OCI-LY7 (cell line): ENCODE measurements at regions of chr5 and their contacts with region 1.

Region 1: GRCh38 chr5:134209477-134210240 is 16.2 kb downstream of the PPP2CA start:
- DNase-seq: no peak
- H3K4me3 ChIP-seq: no peak overlapping the region
- H3K27ac ChIP-seq: no peak overlapping the region
- H3K4me1 ChIP-seq: no peaks in the 10 kb centered on the region
- CTCF ChIP-seq: no peak

Region 2: DNA sequence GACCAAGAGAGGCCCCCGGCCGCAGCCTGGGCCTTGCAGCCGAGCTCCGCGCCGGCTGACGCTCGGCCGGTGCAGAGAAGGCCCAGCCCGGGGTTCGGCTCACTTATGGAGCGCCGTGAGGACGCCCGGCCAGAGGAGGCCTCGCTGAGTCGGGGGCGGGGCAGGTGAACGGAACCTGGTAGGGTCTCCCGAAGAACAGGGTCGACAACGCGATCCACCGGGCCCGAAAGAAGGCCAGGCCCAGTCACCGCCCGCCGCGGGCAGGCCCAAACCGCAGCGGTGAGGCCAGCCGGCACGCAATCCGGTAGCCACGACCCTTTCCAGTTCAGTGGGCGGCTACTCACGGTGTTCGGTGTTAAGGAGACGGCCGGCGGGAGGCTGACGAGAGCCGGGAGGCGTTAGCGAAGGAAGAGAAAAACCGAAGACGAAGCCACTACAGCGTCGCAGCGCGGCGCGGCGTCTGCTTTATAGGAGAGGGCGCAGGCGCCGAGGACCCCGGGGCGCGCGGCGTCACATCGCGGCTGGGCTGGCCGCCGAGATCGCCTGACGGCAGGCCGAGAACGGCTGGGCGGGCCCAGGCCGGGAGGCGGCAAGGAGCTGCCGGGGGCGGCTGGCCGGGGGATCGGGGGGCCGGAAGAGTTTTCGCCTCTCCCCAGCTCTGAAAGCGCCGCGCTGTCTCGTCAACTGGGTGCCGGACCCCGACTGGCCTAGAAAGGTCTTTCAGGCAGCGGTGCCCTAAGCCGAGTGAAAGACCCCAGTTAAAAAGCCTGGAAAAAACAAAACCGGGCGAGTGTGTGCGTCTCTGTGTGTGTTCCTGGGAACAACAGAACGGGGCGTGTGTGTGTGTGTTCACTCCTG is 32.9 kb before region 1 on chr5 and contains the start of gene SKP1:
- CTCF ChIA-PET with region 1: no interaction called
- POLR2A ChIA-PET with region 1: interaction called, 10 read pairs
- intact Hi-C with region 1: no loop called
- DNase-seq: peak; percentile 89
- H3K4me3 ChIP-seq: peak within 1 kb of the TSS; percentile 89
- H3K27ac ChIP-seq: peak within 1 kb of the TSS; percentile 75
- H3K4me1 ChIP-seq: peaks cover 23% of the 10 kb centered on the region
- CTCF ChIP-seq: no peak
- total RNA-seq, gene SKP1: 129 and 142 TPM in 2 replicates

Region 3: DNA sequence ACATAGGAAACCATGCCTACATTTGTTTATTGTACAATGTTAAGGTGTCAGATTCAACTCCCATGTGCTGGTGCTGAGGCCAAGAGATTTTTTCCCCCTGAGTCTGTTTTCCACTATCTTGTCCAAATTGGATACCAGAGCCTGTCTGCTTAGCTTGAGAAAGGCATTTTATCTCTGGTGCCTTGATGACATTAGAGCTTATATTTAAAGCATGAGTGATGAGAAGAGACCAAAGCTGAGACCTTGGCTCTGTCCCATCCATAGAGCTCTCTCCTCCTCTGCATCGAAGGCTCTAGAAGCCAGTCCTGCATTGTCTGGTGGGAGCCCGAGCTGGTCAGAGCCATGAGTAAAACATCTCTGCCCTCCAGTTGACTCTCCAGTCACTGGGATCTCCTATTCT is 26.7 kb after region 1 on chr5:
- CTCF ChIA-PET with region 1: no interaction called
- POLR2A ChIA-PET with region 1: no interaction called
- intact Hi-C with region 1: no loop called
- DNase-seq: no peak
- H3K4me3 ChIP-seq: no peak overlapping the region
- H3K27ac ChIP-seq: no peak overlapping the region
- H3K4me1 ChIP-seq: no peaks in the 10 kb centered on the region
- CTCF ChIP-seq: no peak